Psoas muscle (tissue), 8 donors: ENCODE measurements at regions of chr3 and their contacts with region 1.

Region 1: GRCh38 chr3:44198284-44199269 is 43.1 kb upstream of the TOPAZ1 start:
- DNase-seq: peak in 1 of 2 donors; percentile 40
- ATAC-seq: peak; percentile 64 to 89 (median 70)
- H3K4me3 ChIP-seq: no peak overlapping the region
- H3K27ac ChIP-seq: no peak overlapping the region
- H3K4me1 ChIP-seq: no peaks in the 10 kb centered on the region
- H3K27me3 ChIP-seq: no peaks in the 10 kb centered on the region
- CTCF ChIP-seq: peak; percentile 78

Region 2: DNA sequence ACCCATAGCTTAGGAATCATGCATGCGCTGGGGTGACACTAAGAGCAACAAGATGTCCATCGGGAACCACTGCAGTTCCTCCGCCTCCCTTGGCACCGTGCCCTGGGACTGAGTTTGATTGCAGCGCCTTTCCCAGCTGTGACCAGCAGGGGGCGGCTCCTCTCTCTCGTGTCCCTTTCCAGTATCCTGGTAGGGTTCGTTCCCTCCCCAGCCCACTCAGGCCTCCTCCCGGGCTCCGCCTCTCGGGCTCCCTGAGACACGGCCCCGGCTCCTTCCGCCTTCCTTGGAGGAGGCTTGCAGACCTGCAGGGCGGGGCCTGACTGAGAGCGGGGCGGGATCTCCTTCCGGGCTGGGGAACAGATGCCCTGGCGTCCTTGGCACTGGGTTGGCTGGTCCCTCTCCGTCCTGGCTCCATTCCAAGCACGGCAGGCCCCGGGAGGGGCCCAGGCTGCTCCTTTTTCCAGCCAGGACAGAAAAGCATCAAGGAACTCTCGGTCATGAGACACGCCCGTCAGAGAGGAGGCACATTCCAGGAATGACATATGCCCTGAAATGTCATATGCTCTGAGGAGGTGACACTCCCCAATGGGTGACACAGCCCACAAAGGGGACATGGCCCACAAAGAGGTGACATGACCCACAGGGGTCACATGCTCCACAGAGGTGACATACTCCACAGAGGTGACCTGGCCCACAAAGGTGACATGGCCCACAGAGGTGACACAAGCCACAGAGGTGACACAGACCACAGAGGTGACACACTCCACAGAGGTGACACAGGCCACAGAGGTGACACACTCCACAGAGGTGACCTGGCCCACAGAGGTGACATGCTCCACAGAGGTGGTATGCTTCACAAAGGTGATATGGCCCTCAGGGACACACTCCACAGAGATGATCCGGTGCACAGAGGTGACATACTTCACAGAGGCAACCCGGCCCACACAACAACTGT is 428.8 kb before region 1 on chr3:
- intact Hi-C with region 1: loop called in 1 of 2 experiments (anchors 5 kb)
- DNase-seq: peak; percentile 96 to 98
- ATAC-seq: peak; percentile 77 to 86 (median 82)
- H3K4me3 ChIP-seq: peak overlapping the region; percentile 54
- H3K27ac ChIP-seq: peak overlapping the region; percentile 82
- H3K4me1 ChIP-seq: peaks cover 41% of the 10 kb centered on the region
- H3K27me3 ChIP-seq: no peaks in the 10 kb centered on the region
- CTCF ChIP-seq: peak; percentile 92

Region 3: DNA sequence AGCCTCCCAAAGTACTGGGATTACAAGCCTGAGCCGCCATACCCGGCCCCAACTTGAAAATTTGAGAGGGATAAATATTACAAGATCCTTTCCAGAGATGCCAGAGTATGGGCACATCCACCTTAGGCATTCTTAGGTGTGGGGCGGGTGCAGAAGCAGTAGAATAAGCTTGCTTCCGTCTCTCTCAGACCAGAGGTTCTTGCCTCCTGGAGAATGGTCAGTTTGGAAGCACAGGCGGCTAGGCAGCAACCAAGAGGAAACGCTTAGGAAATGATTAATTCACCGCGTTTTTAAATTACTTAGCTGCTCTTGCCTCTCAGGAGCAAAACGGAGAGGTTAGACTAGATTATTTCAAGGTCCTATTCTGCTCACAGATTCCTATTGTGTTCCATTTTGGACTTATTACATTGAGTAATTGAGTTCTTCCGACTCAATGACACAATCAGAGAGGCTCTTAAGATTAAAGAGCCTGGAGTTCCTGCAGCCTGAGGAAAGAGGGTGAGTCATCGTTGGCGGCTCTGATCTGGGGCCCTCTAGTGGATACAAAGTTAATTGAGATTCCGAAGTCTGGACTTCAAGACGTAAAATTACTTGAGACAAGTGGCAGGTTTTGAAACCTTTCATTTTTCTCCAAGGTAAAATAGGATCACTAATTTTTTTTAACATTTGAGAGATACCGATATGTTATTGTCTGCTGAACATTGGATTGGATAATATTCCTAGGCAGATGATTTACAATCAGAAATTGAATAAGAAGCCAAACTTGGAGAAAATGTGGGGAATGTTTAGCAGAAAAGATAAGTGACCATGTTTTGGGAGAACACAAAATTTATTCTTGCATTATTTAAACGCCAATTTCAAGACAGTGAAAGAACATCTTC is 37.3 kb after region 1 on chr3:
- intact Hi-C with region 1: no loop called
- DNase-seq: peak; percentile 37 to 63
- ATAC-seq: peak; percentile 91 to 99 (median 98)
- H3K4me3 ChIP-seq: peak overlapping the region; percentile 0
- H3K27ac ChIP-seq: peak overlapping the region; percentile 47
- H3K4me1 ChIP-seq: peaks cover 8% of the 10 kb centered on the region
- H3K27me3 ChIP-seq: no peaks in the 10 kb centered on the region
- CTCF ChIP-seq: peak; percentile 73